CD4-positive, alpha-beta T cell (primary cell): ENCODE measurements at regions of chr1 and their contacts with region 1.

Region 1: GRCh38 chr1:150149271-150150132 is at the start of gene PLEKHO1:
- DNase-seq: peak; percentile 70 to 92 (median 86)
- ATAC-seq: peak; percentile 60
- H3K4me3 ChIP-seq: peak within 1 kb of the TSS; percentile 97
- H3K4me3 Mint-ChIP-seq: peak within 1 kb of the TSS; percentile 94
- H3K27ac ChIP-seq: peak within 1 kb of the TSS; percentile 79 to 82
- H3K27ac Mint-ChIP-seq: peak within 1 kb of the TSS; percentile 96
- H3K4me1 ChIP-seq: peaks cover 57% of the 10 kb centered on the region
- H3K4me1 Mint-ChIP-seq: peaks cover 74% of the 10 kb centered on the region
- H3K27me3 ChIP-seq: no peaks in the 10 kb centered on the region
- H3K27me3 Mint-ChIP-seq: no peaks in the 10 kb centered on the region
- CTCF ChIP-seq: no peak
- total RNA-seq, gene PLEKHO1: 97.6 to 110 TPM

Region 2: DNA sequence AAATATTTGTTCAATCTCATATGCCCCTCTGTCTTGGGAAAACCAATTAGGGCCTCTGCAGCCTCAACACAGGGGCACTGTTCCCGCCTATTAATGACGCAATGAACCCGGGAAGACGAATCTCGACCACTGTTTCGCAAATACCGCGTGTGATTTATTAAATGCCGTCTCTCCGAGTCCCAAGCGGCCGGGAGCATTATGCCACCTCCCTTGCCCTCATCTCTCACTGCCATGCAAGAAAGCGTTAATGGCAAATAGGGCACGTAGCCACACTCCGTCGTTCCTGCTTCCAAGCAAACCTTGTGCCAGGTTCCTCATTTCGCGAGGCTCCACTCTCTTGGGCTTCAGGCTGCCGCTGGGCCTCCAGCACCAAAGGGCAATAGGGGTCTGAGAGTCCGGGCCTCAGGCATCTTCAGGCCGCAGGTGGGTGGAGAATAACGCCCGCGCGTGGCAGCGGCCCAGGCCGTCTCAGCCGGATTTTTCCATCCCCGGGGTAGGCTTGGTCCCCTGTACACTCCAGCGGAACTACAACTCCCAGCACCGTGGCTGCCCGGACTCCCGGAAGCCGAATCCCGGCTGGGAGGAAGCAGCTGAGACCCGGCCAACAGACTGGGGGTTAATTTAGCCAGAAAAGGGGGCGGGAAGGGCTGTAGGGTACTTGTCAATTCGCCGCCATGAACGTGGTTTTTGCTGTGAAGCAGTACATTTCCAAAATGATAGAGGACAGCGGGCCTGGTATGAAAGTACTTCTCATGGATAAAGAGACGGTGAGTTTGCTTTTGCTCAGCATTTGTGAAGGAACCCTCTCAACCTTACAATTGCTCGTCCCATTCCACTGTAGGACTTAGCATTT is 82.1 kb before region 1 on chr1 and contains the start of gene VPS45:
- CTCF ChIA-PET with region 1: no interaction called
- POLR2A ChIA-PET with region 1: interaction called, 19 read pairs
- intact Hi-C with region 1: no loop called
- DNase-seq: peak; percentile 54 to 89 (median 72)
- ATAC-seq: peak; percentile 91
- H3K4me3 ChIP-seq: peak within 1 kb of the TSS; percentile 79
- H3K4me3 Mint-ChIP-seq: peak within 1 kb of the TSS; percentile 96
- H3K27ac ChIP-seq: peak within 1 kb of the TSS; percentile 31 to 59
- H3K27ac Mint-ChIP-seq: peak within 1 kb of the TSS; percentile 83
- H3K4me1 ChIP-seq: peaks cover 6% of the 10 kb centered on the region
- H3K4me1 Mint-ChIP-seq: peaks cover 44% of the 10 kb centered on the region
- H3K27me3 ChIP-seq: no peaks in the 10 kb centered on the region
- H3K27me3 Mint-ChIP-seq: no peaks in the 10 kb centered on the region
- CTCF ChIP-seq: no peak
- total RNA-seq, gene VPS45: 9.6 to 10.7 TPM

Region 3: GRCh38 chr1:150109586-150109985 is 39.9 kb before region 1 on chr1:
- CTCF ChIA-PET with region 1: no interaction called
- POLR2A ChIA-PET with region 1: interaction called, 104 read pairs
- intact Hi-C with region 1: loop called (anchors 2 kb)
- DNase-seq: peak in 4 of 14 experiments; percentile 11 to 74 (median 58)
- ATAC-seq: peak; percentile 57
- H3K4me3 ChIP-seq: peak overlapping the region; percentile 58
- H3K4me3 Mint-ChIP-seq: peak overlapping the region; percentile 88
- H3K27ac ChIP-seq: peak overlapping the region; percentile 59 to 77
- H3K27ac Mint-ChIP-seq: peak overlapping the region; percentile 86
- H3K4me1 ChIP-seq: peaks cover 49% of the 10 kb centered on the region
- H3K4me1 Mint-ChIP-seq: peaks cover 85% of the 10 kb centered on the region
- H3K27me3 ChIP-seq: no peaks in the 10 kb centered on the region
- H3K27me3 Mint-ChIP-seq: no peaks in the 10 kb centered on the region
- CTCF ChIP-seq: no peak

Region 4: DNA sequence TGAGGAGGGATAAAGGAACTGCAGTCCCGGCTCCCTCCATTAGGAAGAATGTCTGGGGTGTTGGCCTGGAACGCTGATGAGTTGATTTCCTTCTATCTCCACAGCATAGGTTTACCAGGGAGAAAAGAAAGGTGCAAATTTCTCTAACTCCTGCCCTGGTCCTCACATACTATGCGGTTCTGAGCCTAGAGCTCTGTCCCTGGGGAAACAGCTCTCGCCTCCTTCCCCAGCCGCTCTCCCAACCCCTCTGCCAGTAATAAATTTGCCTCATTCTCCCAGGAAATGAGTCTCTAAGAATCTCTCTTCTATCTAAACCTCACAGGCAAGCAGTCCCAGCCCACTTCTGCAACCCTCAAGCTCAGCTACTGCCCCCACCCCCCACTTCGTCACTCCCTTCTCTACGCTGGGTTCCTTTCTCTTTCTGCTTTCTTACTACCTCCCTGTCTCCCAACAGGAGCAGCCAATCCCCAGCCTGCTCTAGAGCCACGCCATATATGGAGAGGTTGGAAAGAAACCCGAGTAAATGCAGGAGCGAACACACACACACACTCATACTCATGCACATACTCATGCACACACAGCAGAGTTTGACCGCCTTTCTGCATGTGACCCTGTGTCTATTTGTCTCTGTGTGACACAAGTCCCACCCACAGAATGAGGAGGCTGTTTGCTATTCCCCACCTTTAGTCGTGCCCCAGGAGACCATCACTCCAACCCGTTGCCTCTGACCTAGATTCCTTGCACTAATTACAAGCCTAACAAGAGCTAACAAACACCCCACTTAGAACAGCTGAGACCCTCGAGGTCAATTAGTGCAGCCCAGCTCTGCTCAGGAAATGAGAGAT is 13.6 kb after region 1 on chr1:
- CTCF ChIA-PET with region 1: interaction called, 6 read pairs
- POLR2A ChIA-PET with region 1: interaction called, 53 read pairs
- intact Hi-C with region 1: loop called in 1 of 2 experiments (anchors 1 kb)
- DNase-seq: peak in 4 of 14 experiments; percentile 30 to 68 (median 48)
- ATAC-seq: peak; percentile 54
- H3K4me3 ChIP-seq: no peak overlapping the region
- H3K4me3 Mint-ChIP-seq: peak overlapping the region; percentile 8
- H3K27ac ChIP-seq: no peak overlapping the region
- H3K27ac Mint-ChIP-seq: peak overlapping the region; percentile 42
- H3K4me1 ChIP-seq: peaks cover 58% of the 10 kb centered on the region
- H3K4me1 Mint-ChIP-seq: peaks cover 49% of the 10 kb centered on the region
- H3K27me3 ChIP-seq: no peaks in the 10 kb centered on the region
- H3K27me3 Mint-ChIP-seq: no peaks in the 10 kb centered on the region
- CTCF ChIP-seq: no peak

Region 5: GRCh38 chr1:150778409-150778808 is 628.9 kb after region 1 on chr1:
- CTCF ChIA-PET with region 1: no interaction called
- POLR2A ChIA-PET with region 1: no interaction called
- intact Hi-C with region 1: no loop called
- DNase-seq: no peak
- ATAC-seq: no peak
- H3K4me3 ChIP-seq: no peak overlapping the region
- H3K4me3 Mint-ChIP-seq: no peak overlapping the region
- H3K27ac ChIP-seq: no peak overlapping the region
- H3K27ac Mint-ChIP-seq: no peak overlapping the region
- H3K4me1 ChIP-seq: no peaks in the 10 kb centered on the region
- H3K4me1 Mint-ChIP-seq: peaks cover 7% of the 10 kb centered on the region
- H3K27me3 ChIP-seq: no peaks in the 10 kb centered on the region
- H3K27me3 Mint-ChIP-seq: no peaks in the 10 kb centered on the region
- CTCF ChIP-seq: no peak